Naive thymus-derived CD4-positive, alpha-beta T cell (primary cell): ENCODE measurements at regions of chr17 and their contacts with region 1.

Region 1: GRCh38 chr17:4986951-4987766 is at the start of gene CAMTA2:
- DNase-seq: peak; percentile 70 to 87 (median 80)
- ATAC-seq: peak; percentile 93
- H3K4me3 ChIP-seq: peak within 1 kb of the TSS; percentile 91
- H3K4me3 Mint-ChIP-seq: peak within 1 kb of the TSS; percentile 86 to 94 (median 91)
- H3K27ac ChIP-seq: peak within 1 kb of the TSS; percentile 99
- H3K27ac Mint-ChIP-seq: peak within 1 kb of the TSS; percentile 87 to 95 (median 93)
- H3K4me1 ChIP-seq: peaks cover 10 to 23% of the 10 kb centered on the region in 2 donors
- H3K4me1 Mint-ChIP-seq: peaks cover 29 to 51% (median 46%) of the 10 kb centered on the region in 7 donors
- H3K27me3 ChIP-seq: no peaks in the 10 kb centered on the region
- H3K27me3 Mint-ChIP-seq: no peaks in the 10 kb centered on the region
- total RNA-seq, gene CAMTA2: 55.2 to 90.0 (median 64.1) TPM

Region 2: GRCh38 chr17:4939796-4940624 is 47.1 kb before region 1 on chr17 and contains the starts of genes RNF167 and SLC25A11:
- CTCF ChIA-PET with region 1: interaction called, 3 read pairs
- POLR2A ChIA-PET with region 1: interaction called, 10 read pairs
- intact Hi-C with region 1: loop called (anchors 1 kb)
- DNase-seq: peak; percentile 86 to 99 (median 98)
- ATAC-seq: peak; percentile 94
- H3K4me3 ChIP-seq: peak within 1 kb of the TSS; percentile 89
- H3K4me3 Mint-ChIP-seq: peak within 1 kb of the TSS; percentile 92 to 100 (median 98)
- H3K27ac ChIP-seq: peak within 1 kb of the TSS; percentile 89
- H3K27ac Mint-ChIP-seq: peak within 1 kb of the TSS; percentile 89 to 98 (median 95)
- H3K4me1 ChIP-seq: peaks cover 47 to 48% of the 10 kb centered on the region in 2 donors
- H3K4me1 Mint-ChIP-seq: peaks cover 52 to 77% (median 66%) of the 10 kb centered on the region in 7 donors
- H3K27me3 ChIP-seq: no peaks in the 10 kb centered on the region
- H3K27me3 Mint-ChIP-seq: no peaks in the 10 kb centered on the region
- total RNA-seq, gene RNF167: 97.3 to 248 (median 148) TPM
- total RNA-seq, gene SLC25A11: 27.0 to 82.6 (median 44.1) TPM

Region 3: GRCh38 chr17:4948931-4949320 is 38.2 kb before region 1 on chr17:
- CTCF ChIA-PET with region 1: interaction called, 3 read pairs
- POLR2A ChIA-PET with region 1: interaction called, 10 read pairs
- intact Hi-C with region 1: loop called in 1 of 2 experiments (anchors 1 kb)
- DNase-seq: peak in 7 of 9 donors; percentile 69 to 84 (median 79)
- ATAC-seq: peak; percentile 58
- H3K4me3 ChIP-seq: peak overlapping the region; percentile 98
- H3K4me3 Mint-ChIP-seq: peak overlapping the region; percentile 92 to 100 (median 98)
- H3K27ac ChIP-seq: peak overlapping the region; percentile 89
- H3K27ac Mint-ChIP-seq: peak overlapping the region; percentile 83 to 100 (median 96)
- H3K4me1 ChIP-seq: peaks cover 27 to 35% of the 10 kb centered on the region in 2 donors
- H3K4me1 Mint-ChIP-seq: peaks cover 37 to 50% (median 43%) of the 10 kb centered on the region in 7 donors
- H3K27me3 ChIP-seq: no peaks in the 10 kb centered on the region
- H3K27me3 Mint-ChIP-seq: peaks cover 0 to 2% (median 0%) of the 10 kb centered on the region in 5 donors